ENCODE measurements at regions of chr5 and their contacts with region 1.

Region 1: DNA sequence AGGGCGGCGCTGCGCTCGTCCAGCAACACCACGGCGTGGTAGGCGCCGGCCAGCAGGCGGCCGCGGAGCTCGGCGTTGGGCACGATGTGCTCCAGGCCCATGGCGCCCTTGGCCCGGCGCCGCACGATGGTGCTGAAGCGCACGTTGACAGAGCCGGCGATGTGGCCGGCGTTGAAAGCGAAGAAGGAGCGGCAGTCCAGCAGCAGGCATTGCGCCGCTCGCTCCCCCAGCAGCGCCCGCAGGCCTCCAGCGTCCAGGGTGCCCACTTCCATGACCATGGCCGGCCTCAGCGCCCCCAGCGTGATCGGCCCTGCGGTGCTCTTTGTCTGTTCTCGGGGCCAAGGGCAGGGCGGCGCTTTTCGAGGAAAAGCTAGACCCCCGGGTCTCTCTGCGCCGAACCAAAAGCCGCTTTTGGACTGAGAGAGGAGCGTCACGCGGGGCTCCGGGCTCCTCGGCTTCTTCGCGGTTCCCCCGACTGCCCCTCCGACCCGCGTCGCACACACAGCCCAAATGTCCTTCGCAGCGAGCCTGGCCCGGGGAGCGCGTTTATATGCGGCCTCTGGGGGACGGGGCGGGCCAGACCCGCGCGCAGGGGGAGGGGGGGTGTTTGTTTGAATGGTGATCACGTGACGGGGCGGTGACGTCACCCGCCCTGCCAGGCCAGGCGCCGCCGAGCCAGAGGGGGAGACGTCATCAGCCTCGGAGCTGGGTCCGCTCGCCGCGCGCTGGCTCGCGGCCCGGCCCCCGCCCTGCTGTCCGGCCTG is at the start of gene DUSP1:
- DNase-seq: peak; percentile 97 to 100
- H3K4me3 ChIP-seq: peak within 1 kb of the TSS; percentile 88 to 89
- H3K27ac ChIP-seq: peak within 1 kb of the TSS; percentile 97 to 100
- H3K4me1 ChIP-seq: peaks cover 13 to 31% of the 10 kb centered on the region in 2 donors
- H3K27me3 ChIP-seq: no peaks in the 10 kb centered on the region
- CTCF ChIP-seq: no peak
- total RNA-seq, gene DUSP1: 3,919 TPM

Region 2: DNA sequence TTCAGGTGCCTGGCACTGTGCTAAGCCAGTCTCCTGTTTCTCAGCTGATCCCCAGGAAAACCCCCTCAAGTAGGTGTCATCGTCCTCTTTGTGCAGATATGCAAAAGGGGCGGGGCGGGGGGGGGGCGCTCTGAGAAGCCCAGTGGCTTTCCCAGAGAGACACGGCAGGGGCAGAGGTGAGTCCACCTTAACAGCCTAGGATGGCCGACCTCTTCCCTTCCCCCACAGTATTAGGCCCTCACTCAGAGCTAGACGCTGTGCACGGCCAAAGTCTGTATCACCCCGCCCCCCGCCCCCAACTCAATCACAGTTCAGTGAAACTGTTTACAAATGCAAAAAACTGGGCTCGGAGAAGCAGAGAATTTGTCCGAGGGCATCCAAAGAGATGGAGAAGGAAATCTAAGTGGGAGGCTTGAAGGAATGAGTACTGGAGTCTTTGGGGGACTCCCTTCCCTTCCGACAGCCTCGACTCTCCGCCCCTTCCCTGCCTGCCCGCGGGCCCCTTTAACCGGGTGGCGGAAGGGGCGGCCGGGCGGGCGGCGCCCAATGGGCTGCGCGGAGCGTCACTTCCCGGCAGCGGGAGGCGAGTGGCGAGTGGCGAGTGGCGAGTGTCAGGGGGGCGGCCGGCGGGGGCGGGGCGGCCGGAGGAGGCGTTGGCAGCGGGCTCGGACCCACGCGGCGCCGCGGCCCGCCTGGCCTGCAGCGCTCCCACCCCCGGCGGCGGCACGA is 63.0 kb after region 1 on chr5 and contains the start of gene ERGIC1:
- intact Hi-C with region 1: loop called (anchors 2 kb)
- DNase-seq: peak in 1 of 2 donors; percentile 92
- H3K4me3 ChIP-seq: peak within 1 kb of the TSS; percentile 81 to 95
- H3K27ac ChIP-seq: peak within 1 kb of the TSS; percentile 86 to 89
- H3K4me1 ChIP-seq: peaks cover 0 to 31% of the 10 kb centered on the region in 2 donors
- H3K27me3 ChIP-seq: no peaks in the 10 kb centered on the region
- CTCF ChIP-seq: no peak
- total RNA-seq, gene ERGIC1: 184 TPM

Region 3: GRCh38 chr5:172868924-172869591 is 98.2 kb after region 1 on chr5:
- intact Hi-C with region 1: loop called (anchors 1 kb)
- DNase-seq: peak; percentile 83 to 98
- H3K4me3 ChIP-seq: peak overlapping the region; percentile 12 to 34
- H3K27ac ChIP-seq: peak overlapping the region; percentile 99
- H3K4me1 ChIP-seq: peaks cover 47 to 80% of the 10 kb centered on the region in 2 donors
- H3K27me3 ChIP-seq: no peaks in the 10 kb centered on the region
- CTCF ChIP-seq: peak; percentile 44 to 56 (median 56)

Region 4: DNA sequence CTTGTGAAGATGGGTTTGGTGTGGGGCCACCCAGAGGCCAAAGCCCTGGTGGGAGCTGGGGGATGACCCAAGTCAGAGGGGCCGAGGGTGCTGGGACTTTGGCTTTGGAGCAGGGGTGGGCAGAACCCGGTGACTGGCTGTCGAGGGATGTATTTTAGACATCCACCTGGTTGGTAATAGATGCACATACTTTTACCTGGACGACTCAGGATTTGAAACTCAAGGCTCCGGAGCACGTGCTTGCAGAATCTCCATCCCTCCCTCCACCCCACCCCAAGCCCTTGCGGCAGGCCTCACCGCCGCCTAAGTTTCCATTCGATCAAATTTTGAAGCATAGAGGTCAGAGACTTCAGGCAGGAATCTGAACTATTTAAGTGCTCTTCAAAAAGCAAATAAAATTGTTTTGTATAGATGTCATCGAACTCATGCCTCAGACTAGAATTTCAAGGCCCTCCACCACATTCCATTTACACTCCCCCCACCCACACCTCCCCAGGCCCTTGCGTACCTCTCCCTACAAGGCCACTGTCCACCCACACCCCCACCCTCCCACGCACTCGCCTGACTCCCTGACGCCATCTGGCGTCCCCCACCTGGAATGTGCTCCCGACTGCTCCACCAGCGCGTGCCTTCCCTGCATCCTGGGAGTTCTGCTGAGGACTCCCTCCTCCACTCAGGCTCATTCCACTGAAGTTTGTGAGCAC is 131.8 kb after region 1 on chr5:
- intact Hi-C with region 1: loop called (anchors 2 kb)
- DNase-seq: peak in 1 of 2 donors; percentile 95
- H3K4me3 ChIP-seq: peak overlapping the region in 1 of 2 donors; percentile 5
- H3K27ac ChIP-seq: peak overlapping the region; percentile 96 to 97
- H3K4me1 ChIP-seq: peaks cover 42 to 77% of the 10 kb centered on the region in 2 donors
- H3K27me3 ChIP-seq: no peaks in the 10 kb centered on the region
- CTCF ChIP-seq: peak; percentile 24 to 58 (median 58)

Region 5: GRCh38 chr5:172932313-172933017 is 161.6 kb after region 1 on chr5:
- intact Hi-C with region 1: loop called (anchors 5 kb)
- DNase-seq: peak in 1 of 2 donors; percentile 91
- H3K4me3 ChIP-seq: peak overlapping the region in 1 of 2 donors; percentile 11
- H3K27ac ChIP-seq: peak overlapping the region; percentile 93 to 94
- H3K4me1 ChIP-seq: peaks cover 18 to 22% of the 10 kb centered on the region in 2 donors
- H3K27me3 ChIP-seq: no peaks in the 10 kb centered on the region
- CTCF ChIP-seq: peak; percentile 96 to 98 (median 97)